ENCODE measurements at regions of chr1 and their contacts with region 1.

Region 1: DNA sequence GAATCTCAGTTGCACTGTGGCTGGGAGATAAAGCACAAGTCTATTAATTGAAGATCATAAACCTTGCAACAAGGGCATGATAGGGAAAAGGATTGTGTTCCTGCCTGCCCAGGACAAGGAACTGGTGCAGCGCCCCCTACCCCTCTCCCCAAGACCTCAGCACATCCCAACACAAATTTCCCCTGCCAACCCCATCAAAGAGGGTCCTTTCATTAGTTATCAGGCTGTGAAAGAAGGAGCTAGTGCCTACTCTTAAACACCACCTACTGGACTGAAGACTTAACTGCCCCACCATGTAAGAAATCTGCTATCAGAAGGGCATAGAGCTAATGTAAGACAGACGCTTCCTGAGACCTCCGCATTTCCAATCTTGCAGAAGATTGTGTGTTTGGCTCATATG is 372.6 kb downstream of the AGBL4 start:
- DNase-seq: no peak
- H3K4me3 ChIP-seq: no peak overlapping the region
- H3K27ac ChIP-seq: no peak overlapping the region
- H3K4me1 ChIP-seq: no peaks in the 10 kb centered on the region
- H3K27me3 ChIP-seq: no peaks in the 10 kb centered on the region
- CTCF ChIP-seq: no peak
- EP300 ChIP-seq: no peak
- POLR2A ChIP-seq: no peak

Region 2: GRCh38 chr1:49677706-49678105 is 26.6 kb after region 1 on chr1:
- intact Hi-C with region 1: loop called in 1 of 4 experiments (anchors 2 kb)
- DNase-seq: no peak
- H3K4me3 ChIP-seq: no peak overlapping the region
- H3K27ac ChIP-seq: no peak overlapping the region
- H3K4me1 ChIP-seq: no peaks in the 10 kb centered on the region
- H3K27me3 ChIP-seq: no peaks in the 10 kb centered on the region
- CTCF ChIP-seq: no peak
- EP300 ChIP-seq: no peak
- POLR2A ChIP-seq: no peak

Measured in ovary (tissue), 10 donors.